PC-9 (cell line): ENCODE measurements at regions of chr12 and their contacts with region 1.

Region 1: DNA sequence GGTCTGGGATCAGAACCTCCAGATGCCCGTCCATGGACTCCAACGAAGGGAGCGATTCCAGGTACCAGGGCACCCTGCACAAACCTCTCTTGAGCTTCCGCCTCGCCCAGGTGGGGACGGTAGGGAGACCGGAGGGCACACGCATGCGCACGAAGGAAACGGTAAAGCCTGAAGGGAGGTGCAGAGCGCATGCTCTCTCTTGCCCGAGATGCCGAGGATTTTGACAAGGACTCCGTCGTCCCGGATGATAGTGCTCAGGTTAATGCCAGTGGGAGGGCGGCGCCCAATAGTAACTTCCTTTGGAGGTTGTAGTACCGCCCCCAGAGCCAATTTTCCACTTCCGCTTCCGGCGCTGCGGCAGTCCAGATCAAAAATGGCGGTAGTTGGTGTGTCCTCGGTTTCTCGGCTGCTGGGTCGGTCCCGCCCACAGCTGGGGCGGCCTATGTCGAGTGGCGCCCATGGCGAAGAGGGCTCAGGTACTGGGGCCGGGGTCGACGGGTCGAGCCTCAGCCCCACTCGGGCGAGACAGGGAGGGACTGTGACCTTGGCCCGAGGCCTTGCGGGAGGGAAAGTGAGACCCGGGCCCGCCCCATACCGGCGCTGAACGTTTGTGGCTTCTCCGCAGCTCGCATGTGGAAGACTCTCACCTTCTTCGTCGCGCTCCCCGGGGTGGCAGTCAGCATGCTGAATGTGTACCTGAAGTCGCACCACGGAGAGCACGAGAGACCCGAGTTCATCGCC is at the start of gene COX6A1:
- DNase-seq: peak; percentile 96 to 97
- H3K4me3 ChIP-seq: peak within 1 kb of the TSS; percentile 67
- H3K27ac ChIP-seq: peak within 1 kb of the TSS; percentile 49
- H3K4me1 ChIP-seq: peaks cover 12% of the 10 kb centered on the region
- H3K27me3 ChIP-seq: no peaks in the 10 kb centered on the region
- CTCF ChIP-seq: no peak
- total RNA-seq, gene COX6A1: 433 and 556 TPM in 2 replicates

Region 2: DNA sequence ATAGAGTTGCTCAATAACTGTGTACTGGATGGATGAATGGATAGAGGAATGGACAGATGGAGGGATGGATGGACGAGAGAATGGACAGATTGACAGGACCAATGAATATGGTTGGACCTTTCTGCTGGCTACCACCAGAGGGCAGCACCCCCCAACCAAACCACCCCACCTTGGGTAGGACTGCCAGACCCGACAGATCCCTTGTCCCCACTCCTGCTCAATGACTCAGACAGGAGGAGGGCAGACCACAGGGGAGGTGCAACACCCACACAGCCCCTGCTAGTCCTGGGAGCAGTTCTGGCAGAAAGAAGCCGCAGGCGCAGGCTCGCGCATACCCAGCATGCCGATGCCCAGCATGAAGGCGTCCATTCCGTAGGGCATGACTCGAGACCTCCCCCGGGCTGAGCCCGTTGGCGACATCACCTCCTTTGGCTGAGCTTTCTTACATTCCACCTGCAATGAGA is 81.3 kb before region 1 on chr12:
- CTCF ChIA-PET with region 1: no interaction called
- POLR2A ChIA-PET with region 1: no interaction called
- intact Hi-C with region 1: loop called (anchors 2 kb)
- DNase-seq: peak; percentile 92 to 94
- H3K4me3 ChIP-seq: peak overlapping the region; percentile 22; the same call in 1 of the 2 replicates
- H3K27ac ChIP-seq: no peak overlapping the region
- H3K4me1 ChIP-seq: peaks cover 5% of the 10 kb centered on the region; the same call in 1 of the 2 replicates
- H3K27me3 ChIP-seq: no peaks in the 10 kb centered on the region
- CTCF ChIP-seq: peak; percentile 89

Region 3: DNA sequence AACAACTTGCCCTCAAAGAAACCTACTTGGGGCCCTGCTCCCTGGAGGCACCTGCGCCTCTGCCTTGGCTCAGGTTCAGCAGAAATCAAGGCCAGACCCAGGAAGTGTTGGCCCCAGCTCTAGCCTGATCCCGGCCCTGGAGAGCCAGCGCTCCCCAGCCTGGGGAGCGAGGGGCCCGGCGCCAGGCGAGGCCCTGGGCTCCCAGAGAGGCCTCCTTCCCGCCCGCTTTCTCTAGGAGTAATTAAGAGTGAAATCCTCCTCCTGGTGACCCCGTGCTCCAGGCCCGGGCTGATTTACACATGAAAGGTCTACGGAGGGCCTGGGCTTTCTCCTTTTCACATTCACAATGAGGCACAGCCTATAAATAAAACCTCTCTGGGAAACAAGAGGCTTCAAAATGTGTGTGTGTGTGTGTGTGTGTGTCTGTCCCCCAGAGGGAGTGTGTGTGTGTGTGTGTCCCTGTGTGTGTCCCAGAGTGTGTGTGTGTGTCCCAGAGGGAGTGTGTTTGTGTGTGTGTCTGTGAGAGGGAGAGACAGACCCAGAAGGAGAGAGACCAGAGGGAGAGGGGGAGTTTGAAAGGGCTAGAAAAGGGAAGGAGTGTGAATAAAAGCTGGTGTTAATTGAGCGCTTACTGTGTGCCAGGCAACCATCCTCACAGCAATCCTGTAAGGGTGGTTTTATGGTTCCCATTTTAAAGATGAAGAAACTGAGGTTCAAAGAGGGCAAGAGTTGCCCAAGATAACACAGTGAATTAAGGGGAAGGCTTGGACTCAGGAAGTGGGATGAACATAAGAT is 23.8 kb before region 1 on chr12:
- CTCF ChIA-PET with region 1: no interaction called
- POLR2A ChIA-PET with region 1: no interaction called
- intact Hi-C with region 1: no loop called
- DNase-seq: no peak
- H3K4me3 ChIP-seq: no peak overlapping the region
- H3K27ac ChIP-seq: no peak overlapping the region
- H3K4me1 ChIP-seq: no peaks in the 10 kb centered on the region
- H3K27me3 ChIP-seq: no peaks in the 10 kb centered on the region
- CTCF ChIP-seq: no peak

Region 4: DNA sequence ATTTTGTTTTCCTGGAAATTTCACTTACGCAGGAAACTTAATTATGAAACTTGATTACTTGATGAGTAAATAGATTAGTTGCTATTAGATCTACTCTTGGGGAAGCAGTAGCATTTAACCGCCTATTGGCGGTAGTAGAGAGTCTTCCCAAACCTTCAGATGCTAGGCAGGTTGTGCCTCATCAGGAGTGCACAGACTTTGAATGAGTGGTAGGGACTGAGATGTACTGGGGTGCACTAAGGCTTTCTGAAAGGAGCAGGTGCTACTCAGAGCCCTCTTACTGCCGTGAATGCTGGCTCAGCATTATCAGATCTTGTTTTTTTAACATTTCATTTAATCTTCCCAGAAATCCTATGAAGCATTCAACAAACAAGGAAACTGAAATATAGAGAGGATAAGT is 16.1 kb after region 1 on chr12:
- CTCF ChIA-PET with region 1: no interaction called
- POLR2A ChIA-PET with region 1: interaction called, 13 read pairs
- intact Hi-C with region 1: no loop called
- DNase-seq: no peak
- H3K4me3 ChIP-seq: no peak overlapping the region
- H3K27ac ChIP-seq: no peak overlapping the region
- H3K4me1 ChIP-seq: no peaks in the 10 kb centered on the region
- H3K27me3 ChIP-seq: no peaks in the 10 kb centered on the region
- CTCF ChIP-seq: peak; percentile 61

Region 5: DNA sequence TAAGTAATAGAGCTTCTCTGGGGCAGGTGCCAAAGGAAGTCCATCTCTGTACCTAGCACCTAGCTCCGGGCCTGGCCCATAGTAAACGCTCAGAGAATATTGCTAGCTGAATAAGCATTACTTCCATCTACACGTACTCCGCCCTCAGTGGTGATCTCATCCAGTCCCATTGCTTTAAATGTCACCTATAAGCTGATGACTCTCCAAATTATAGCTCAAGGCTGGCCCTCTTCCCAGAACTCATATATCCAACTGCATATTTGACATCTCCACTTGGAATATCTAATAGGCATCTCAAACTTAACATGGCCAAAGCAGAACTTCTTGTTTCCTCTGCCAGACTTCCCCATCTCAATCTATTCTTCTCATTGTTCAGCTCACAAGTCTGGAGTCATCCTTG is 51.1 kb after region 1 on chr12:
- CTCF ChIA-PET with region 1: no interaction called
- POLR2A ChIA-PET with region 1: no interaction called
- intact Hi-C with region 1: no loop called
- DNase-seq: no peak
- H3K4me3 ChIP-seq: no peak overlapping the region
- H3K27ac ChIP-seq: no peak overlapping the region
- H3K4me1 ChIP-seq: no peaks in the 10 kb centered on the region
- H3K27me3 ChIP-seq: no peaks in the 10 kb centered on the region
- CTCF ChIP-seq: no peak